Ovary (tissue), 10 donors: ENCODE measurements at regions of chr18 and their contacts with region 1.

Region 1: GRCh38 chr18:54679318-54680149 is 88.5 kb downstream of the DYNAP start:
- DNase-seq: no peak
- H3K4me3 ChIP-seq: no peak overlapping the region
- H3K27ac ChIP-seq: no peak overlapping the region
- H3K4me1 ChIP-seq: no peaks in the 10 kb centered on the region
- H3K27me3 ChIP-seq: no peaks in the 10 kb centered on the region
- CTCF ChIP-seq: peak in 1 of 3 donors; percentile 39
- EP300 ChIP-seq: no peak
- POLR2A ChIP-seq: no peak

Region 2: GRCh38 chr18:54983041-54983686 is 303.6 kb after region 1 on chr18:
- intact Hi-C with region 1: loop called in 3 of 4 experiments (anchors 5 to 10 kb)
- DNase-seq: no peak
- H3K4me3 ChIP-seq: no peak overlapping the region
- H3K27ac ChIP-seq: no peak overlapping the region
- H3K4me1 ChIP-seq: no peaks in the 10 kb centered on the region
- H3K27me3 ChIP-seq: no peaks in the 10 kb centered on the region
- CTCF ChIP-seq: peak; percentile 41 to 75 (median 66)
- EP300 ChIP-seq: no peak
- POLR2A ChIP-seq: no peak